ENCODE measurements at regions of chr1 and their contacts with region 1.

Region 1: GRCh38 chr1:173824331-173825081 is at the starts of genes CENPL and DARS2:
- DNase-seq: peak; percentile 90 to 99 (median 95)

Region 2: GRCh38 chr1:172826096-172826743 is 998.3 kb before region 1 on chr1:
- intact Hi-C with region 1: loop called (anchors 10 kb)
- DNase-seq: no peak

Region 3: DNA sequence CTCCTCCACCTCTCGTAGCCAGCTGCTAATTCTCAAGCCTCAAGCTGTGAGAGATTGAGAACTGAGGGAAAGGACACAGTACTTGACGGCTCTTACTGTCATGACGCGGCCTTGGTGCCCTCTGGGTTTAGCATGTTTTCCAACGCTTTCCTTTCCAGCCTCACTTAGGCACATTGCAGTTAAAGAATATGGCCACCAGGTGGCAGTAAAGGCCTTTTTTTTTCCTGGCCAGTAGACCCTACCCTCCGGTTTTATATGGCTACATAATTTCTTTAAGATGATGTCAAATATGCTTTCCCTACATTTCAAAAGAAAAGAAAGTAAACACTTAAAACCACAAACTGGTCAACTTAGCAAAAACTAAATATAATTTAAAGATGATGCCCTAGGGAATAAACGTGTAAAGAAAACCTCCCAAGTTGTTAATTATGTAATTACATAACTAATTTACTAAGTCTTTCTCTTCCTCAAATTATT is 404.1 kb before region 1 on chr1:
- intact Hi-C with region 1: loop called (anchors 2 kb)
- DNase-seq: peak in 2 of 10 donors; percentile 19 to 33

Region 4: GRCh38 chr1:173429471-173430402 is 394.8 kb before region 1 on chr1:
- intact Hi-C with region 1: loop called (anchors 1 kb)
- DNase-seq: peak; percentile 69 to 96 (median 76)

Region 5: GRCh38 chr1:173476664-173477285 is 347.7 kb before region 1 on chr1:
- intact Hi-C with region 1: loop called (anchors 2 kb)
- DNase-seq: peak; percentile 90 to 99 (median 95)

Region 6: GRCh38 chr1:173702736-173703135 is 121.8 kb before region 1 on chr1:
- intact Hi-C with region 1: no loop called
- DNase-seq: no peak

Region 7: GRCh38 chr1:173714759-173715537 is 109.6 kb before region 1 on chr1 and contains the start of gene KLHL20:
- intact Hi-C with region 1: loop called (anchors 5 kb)
- DNase-seq: peak; percentile 63 to 96 (median 78)

Region 8: DNA sequence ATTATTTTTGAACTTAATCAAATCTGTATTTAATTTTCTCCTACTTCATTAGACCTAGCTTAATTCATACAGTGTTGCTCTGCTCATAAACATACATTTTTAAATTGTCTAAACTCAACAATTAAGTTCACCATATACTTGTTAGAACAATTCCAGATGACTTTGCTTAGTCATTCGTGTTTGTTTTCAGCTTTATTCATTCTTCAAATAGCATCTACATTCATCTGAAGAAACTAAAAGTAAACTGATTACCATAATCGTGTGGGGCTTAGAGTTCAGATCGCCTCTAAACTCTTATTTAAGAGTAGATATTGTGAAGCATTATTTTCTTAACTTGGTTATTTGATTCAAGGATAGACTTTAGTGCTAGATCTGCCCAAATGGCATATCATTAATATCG is 75.4 kb before region 1 on chr1:
- intact Hi-C with region 1: no loop called
- DNase-seq: no peak

Region 9: GRCh38 chr1:173867753-173868265 is 43.3 kb after region 1 on chr1 and contains the start of gene GAS5:
- intact Hi-C with region 1: loop called (anchors 2 kb)
- DNase-seq: peak; percentile 95 to 100 (median 97)

Measured in posterior cingulate gyrus (tissue), 11 donors.